Left colon (tissue), 2 donors: ENCODE measurements at regions of chr4 and their contacts with region 1.

Region 1: DNA sequence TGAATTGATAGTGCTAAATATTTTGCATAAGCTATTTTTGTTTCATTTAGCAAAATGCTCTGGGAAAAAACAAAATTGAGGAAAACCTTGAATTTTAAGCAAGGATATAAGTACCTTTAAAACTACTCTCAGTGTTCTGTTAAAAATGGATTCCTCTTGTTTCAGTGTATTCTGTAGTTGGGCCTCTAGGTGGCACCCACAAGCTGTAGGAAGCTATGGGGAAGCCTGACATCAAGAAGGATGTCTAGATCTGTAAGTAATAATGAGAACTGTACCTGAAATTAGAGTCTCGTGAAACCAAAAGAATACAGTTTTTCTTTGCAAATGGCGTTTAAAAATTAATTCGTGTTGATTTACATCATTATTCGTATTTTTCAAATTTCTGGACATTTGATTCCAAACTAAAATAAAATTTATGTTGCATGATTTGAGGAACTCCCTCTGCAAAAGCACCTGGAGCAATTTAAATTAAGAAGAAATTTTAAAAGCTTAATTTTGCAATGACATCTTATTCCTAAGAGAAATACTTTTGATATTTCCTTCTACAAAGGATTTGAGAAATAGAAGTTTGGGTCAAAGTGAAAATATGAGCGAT is 51.2 kb downstream of the TMPRSS11E start:
- DNase-seq: peak; percentile 38 to 54
- ATAC-seq: peak; percentile 93

Region 2: DNA sequence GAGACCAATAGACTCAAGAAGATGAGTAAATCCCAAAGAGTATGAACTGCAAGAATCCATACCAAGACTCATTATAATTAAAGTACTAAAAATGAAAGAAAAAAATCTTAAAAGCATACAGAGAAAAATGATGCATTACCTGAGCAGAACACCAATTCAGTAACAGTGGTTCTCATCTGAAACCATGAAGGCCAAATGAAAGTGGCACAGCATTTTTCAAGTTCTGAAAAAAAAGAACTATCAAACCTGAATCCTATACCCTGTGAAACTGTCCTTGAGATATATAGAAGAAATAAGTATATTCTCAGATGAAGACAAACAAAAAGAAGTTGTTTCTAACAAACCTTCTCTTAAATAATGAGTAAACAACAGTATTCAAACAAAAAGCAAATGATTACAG is 495.6 kb before region 1 on chr4:
- intact Hi-C with region 1: no loop called
- DNase-seq: no peak
- ATAC-seq: no peak

Region 3: GRCh38 chr4:68119921-68120320 is 378.6 kb before region 1 on chr4:
- intact Hi-C with region 1: no loop called
- DNase-seq: no peak
- ATAC-seq: no peak

Region 4: DNA sequence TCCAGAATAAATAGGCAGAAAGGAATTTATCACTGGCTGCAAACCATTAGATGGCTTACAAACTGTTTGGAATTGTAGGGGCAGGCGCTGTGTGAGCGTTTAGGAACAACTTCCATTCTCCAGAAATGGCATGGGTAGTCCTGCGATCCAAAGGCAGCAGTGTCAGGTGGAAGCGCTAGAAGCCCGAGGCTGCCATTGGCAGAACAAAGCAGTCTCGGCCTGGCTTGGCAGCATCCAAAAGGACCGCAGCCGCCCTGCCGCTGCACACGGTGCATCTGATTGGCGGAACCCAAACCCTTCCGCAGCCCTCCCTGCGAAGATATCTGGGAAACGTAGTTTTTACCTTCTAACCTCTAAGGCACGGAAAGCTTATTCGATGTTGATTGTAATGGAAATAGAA is 125.0 kb before region 1 on chr4:
- intact Hi-C with region 1: no loop called
- DNase-seq: peak; percentile 55 to 66
- ATAC-seq: peak; percentile 60

Region 5: GRCh38 chr4:69167300-69167699 is 668.8 kb after region 1 on chr4:
- intact Hi-C with region 1: loop called in 1 of 2 experiments (anchors 5 kb)
- DNase-seq: no peak
- ATAC-seq: no peak